ENCODE measurements at regions of chr7 and their contacts with region 1.

Region 1: DNA sequence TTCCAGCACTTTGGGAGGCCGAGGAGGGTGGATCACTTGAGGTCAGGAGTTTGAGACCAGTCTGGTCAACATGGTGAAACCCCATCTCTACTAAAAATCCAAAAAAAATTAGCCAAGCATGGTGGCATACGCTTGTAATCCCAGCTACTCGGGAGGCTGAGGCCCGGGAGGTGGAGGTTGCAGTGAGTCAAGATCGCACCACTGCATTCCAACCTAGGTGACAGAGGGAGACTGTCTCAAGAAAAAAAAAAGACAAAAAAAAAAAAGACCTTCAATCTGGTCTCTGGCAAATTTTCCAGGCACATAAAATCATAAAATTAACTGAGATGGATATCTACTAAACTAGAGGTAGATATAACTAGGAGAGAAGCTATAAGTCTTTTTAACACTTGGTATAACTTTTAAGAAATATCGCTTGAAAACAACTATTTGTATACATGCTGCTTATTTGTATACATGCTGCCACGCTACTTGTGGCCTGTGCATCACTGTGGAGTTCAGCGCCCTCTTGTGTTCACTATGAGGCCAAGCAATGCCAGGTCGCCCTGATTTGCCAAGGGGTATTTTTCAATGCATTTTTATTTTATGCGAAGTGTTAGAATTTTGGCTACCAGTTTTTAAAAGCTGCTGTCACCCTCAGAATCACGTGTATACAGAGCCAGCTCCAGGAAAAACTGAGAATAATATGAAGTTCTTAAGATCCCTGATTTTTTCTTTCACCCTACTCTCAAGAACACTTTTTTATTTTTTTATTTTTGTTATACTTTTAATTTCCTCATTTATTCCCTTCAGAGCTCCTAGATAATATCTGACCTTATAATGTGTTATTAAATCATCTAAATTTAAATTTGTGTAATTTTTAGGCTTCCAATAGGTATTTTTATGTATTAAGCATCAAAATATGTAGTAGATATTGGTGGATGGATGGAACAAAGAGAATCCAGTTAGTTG is 26.7 kb downstream of the CYCS start:
- H3K4me3 ChIP-seq: no peak overlapping the region
- H3K27ac ChIP-seq: no peak overlapping the region
- H3K4me1 ChIP-seq: no peaks in the 10 kb centered on the region
- CTCF ChIP-seq: peak; percentile 63

Region 2: GRCh38 chr7:23938937-23939552 is 1159.3 kb before region 1 on chr7:
- CTCF ChIA-PET with region 1: interaction called, 10 read pairs
- POLR2A ChIA-PET with region 1: no interaction called
- H3K4me3 ChIP-seq: no peak overlapping the region
- H3K27ac ChIP-seq: no peak overlapping the region
- H3K4me1 ChIP-seq: no peaks in the 10 kb centered on the region
- CTCF ChIP-seq: peak; percentile 39; the same call in 1 of the 2 replicates

Region 3: GRCh38 chr7:24778543-24779282 is 319.7 kb before region 1 on chr7:
- CTCF ChIA-PET with region 1: interaction called, 15 read pairs
- POLR2A ChIA-PET with region 1: no interaction called
- H3K4me3 ChIP-seq: no peak overlapping the region
- H3K27ac ChIP-seq: no peak overlapping the region
- H3K4me1 ChIP-seq: no peaks in the 10 kb centered on the region
- CTCF ChIP-seq: no peak

Region 4: DNA sequence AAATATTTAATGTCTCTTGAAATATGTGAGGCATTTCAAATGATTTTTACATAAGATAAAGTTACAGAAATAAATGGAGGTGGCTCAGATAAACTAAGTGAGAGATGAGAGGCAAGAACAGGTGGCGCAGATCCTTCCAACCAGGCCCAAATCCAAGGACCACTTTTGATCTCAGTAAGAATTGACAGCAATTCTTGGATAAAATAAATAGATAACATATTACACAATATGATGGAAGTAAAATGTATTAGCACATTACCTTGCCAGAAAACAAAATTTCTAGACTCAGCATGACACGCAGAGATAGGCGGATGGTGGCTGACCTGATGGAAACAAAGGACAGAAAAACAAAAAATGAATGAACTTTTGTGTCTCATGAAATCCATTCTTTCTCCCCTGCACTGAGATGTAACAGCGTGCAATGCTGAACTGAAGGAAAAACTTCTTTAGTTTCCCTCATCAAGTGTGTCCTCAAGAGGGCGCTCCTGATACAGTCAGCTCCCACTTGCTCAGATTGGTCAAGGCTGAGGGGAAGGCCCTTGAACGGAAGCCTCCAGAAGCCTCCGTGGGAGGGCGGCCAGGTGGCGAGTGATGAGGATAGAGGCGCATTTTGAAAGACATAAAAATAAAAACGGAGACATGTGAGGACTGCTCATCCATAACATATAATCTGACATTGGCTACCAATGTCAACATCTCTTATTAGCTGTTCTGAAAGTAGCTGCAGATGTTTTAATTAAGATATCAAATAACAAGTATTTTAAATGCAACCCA is 278.3 kb before region 1 on chr7:
- CTCF ChIA-PET with region 1: interaction called, 142 read pairs
- POLR2A ChIA-PET with region 1: no interaction called
- H3K4me3 ChIP-seq: no peak overlapping the region
- H3K27ac ChIP-seq: no peak overlapping the region
- H3K4me1 ChIP-seq: 0 out of 2 replicates have a peak, but pooled peaks cover 4% of the 10 kb centered on the region
- CTCF ChIP-seq: peak; percentile 48; the same call in 1 of the 2 replicates

Region 5: DNA sequence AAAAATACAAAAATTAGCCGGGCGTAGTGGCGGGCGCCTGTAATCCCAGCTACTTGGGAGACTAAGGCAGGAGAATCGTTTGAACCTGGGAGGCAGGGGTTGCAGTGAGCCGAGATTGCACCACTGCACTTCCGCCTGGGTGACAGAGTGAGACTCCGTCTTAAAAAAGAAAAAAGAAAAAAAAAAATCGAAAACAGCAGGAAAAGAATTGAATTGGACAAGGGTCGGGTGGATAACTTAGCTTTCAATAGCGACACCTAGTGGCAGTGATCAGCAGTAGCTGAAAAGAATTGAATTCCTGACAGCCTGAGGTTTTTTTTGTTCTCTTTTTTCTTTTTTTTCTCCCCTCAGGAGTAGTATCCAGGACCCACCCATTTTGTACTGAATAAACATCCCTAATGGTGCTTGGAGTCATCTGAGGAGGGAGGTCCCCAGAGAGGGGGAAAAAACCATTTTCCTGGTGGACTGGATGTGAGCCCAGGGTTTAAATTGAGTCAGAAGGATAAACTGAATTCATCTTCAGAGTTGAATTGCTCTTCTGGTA is 28.4 kb before region 1 on chr7:
- CTCF ChIA-PET with region 1: interaction called, 10 read pairs
- POLR2A ChIA-PET with region 1: no interaction called
- H3K4me3 ChIP-seq: no peak overlapping the region
- H3K27ac ChIP-seq: no peak overlapping the region; the same call in 1 of the 2 replicates
- H3K4me1 ChIP-seq: no peaks in the 10 kb centered on the region
- CTCF ChIP-seq: peak; percentile 49

Region 6: DNA sequence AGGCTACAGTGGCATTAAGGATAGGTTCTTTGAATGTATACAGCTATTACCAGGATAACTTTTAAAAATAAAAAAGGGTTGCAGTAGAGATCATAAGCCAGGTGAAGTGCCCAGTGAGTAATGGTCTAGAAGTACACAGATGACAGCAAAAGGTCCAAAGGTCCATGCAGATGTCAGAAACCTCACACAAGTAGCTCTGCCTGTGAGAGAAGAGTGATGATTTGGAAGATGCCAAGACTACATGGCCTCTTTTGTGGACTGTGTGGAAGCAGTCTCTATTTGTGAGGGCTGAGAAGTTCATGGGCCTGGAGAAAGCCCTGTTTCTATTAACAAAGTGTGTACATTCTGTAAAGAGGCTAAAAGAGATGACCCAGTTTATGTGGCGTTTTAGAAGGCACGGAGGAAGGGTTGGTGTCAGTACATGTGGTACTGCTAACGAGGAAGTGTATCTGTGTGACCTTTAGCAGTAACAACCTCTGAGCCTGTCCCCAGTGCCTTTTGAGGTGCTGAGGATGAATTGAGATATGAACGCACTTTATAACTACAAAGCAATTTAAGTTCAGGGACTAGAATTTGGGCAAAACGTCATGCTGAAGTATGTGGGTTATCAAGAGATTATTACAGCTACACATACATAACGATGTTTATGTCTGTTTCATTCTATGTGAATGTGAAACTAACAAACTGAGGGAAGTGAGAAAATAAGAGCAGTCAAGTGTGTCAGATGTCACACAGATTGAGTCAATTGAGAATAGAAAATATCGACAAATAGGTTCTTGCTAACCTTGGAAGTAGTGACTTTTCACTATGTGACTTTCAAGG is 19.1 kb after region 1 on chr7:
- CTCF ChIA-PET with region 1: interaction called, 24 read pairs
- POLR2A ChIA-PET with region 1: interaction called, 3 read pairs
- H3K4me3 ChIP-seq: no peak overlapping the region
- H3K27ac ChIP-seq: no peak overlapping the region
- H3K4me1 ChIP-seq: no peaks in the 10 kb centered on the region
- CTCF ChIP-seq: no peak

Region 7: GRCh38 chr7:25287291-25287690 is 188.9 kb after region 1 on chr7:
- CTCF ChIA-PET with region 1: no interaction called
- POLR2A ChIA-PET with region 1: no interaction called
- H3K4me3 ChIP-seq: no peak overlapping the region
- H3K27ac ChIP-seq: no peak overlapping the region
- H3K4me1 ChIP-seq: no peaks in the 10 kb centered on the region
- CTCF ChIP-seq: no peak